Motor neuron (in vitro differentiated cells): ENCODE measurements at regions of chr7 and their contacts with region 1.

Region 1: GRCh38 chr7:157138424-157139110 is at the start of gene UBE3C:
- ATAC-seq: peak; percentile 82 to 91 (median 88)
- H3K4me3 ChIP-seq: peak within 1 kb of the TSS; percentile 64 to 96 (median 70)
- H3K27ac ChIP-seq: peak within 1 kb of the TSS; percentile 91 to 97
- H3K4me1 ChIP-seq: peaks cover 6 to 19% of the 10 kb centered on the region in 2 donors
- total RNA-seq, gene UBE3C: 21.8 to 111 (median 34.1) TPM

Region 2: DNA sequence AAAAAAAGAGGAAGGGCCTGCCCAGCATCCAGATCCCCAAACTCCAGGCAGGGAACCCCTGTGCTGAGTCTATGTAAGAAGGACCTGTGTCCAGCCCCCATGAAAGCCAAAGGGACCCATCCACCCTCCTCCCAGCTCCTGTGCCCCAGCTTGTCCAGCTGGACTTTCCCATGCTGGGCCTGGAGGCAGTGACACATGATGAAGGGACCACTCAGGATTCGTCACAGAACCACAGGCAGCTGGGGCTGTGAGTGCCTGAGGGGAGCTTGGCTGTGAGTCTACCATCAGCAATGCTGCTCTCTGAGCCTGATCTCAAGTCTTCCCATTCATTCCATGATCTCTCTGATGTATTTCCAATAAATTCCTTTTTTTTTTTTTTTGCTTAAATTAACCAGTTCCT is 91.9 kb before region 1 on chr7:
- in situ Hi-C with region 1: loop called in 1 of 9 experiments (anchors 25 kb)
- ATAC-seq: peak in 1 of 8 experiments; percentile 25
- H3K4me3 ChIP-seq: no peak overlapping the region
- H3K27ac ChIP-seq: no peak overlapping the region
- H3K4me1 ChIP-seq: peaks cover 0 to 3% of the 10 kb centered on the region in 2 donors

Region 3: GRCh38 chr7:157347217-157347904 is 208.8 kb after region 1 on chr7:
- in situ Hi-C with region 1: no loop called
- ATAC-seq: peak in 3 of 8 experiments; percentile 22 to 47 (median 45)
- H3K4me3 ChIP-seq: no peak overlapping the region
- H3K27ac ChIP-seq: no peak overlapping the region
- H3K4me1 ChIP-seq: no peaks in the 10 kb centered on the region